ENCODE measurements at regions of chr7 and their contacts with region 1.

Region 1: GRCh38 chr7:140175221-140176121 is 1.3 kb downstream of the KDM7A start:
- DNase-seq: peak; percentile 91 to 95 (median 93)
- ATAC-seq: peak; percentile 75 to 87 (median 79)
- H3K4me3 ChIP-seq: peak overlapping the region; percentile 56 to 98 (median 90)
- H3K27ac ChIP-seq: peak overlapping the region; percentile 76 to 100 (median 100)
- H3K4me1 ChIP-seq: peaks cover 0 to 41% (median 19%) of the 10 kb centered on the region in 12 donors
- H3K27me3 ChIP-seq: no peaks in the 10 kb centered on the region
- CTCF ChIP-seq: peak; percentile 67 to 89 (median 76)
- POLR2A ChIP-seq: peak; percentile 71 to 97

Region 2: GRCh38 chr7:140196361-140197217 is 21.1 kb after region 1 on chr7:
- intact Hi-C with region 1: loop called in 1 of 10 experiments (anchors 2 kb)
- DNase-seq: peak in 1 of 5 donors; percentile 38
- ATAC-seq: peak in 2 of 4 donors; percentile 20 to 57
- H3K4me3 ChIP-seq: no peak overlapping the region
- H3K27ac ChIP-seq: peak overlapping the region in 1 of 12 donors; percentile 32
- H3K4me1 ChIP-seq: peaks cover 0 to 13% (median 1%) of the 10 kb centered on the region in 12 donors
- H3K27me3 ChIP-seq: no peaks in the 10 kb centered on the region
- CTCF ChIP-seq: no peak
- POLR2A ChIP-seq: no peak

Region 3: GRCh38 chr7:140230861-140231770 is 55.6 kb after region 1 on chr7:
- intact Hi-C with region 1: loop called in 4 of 10 experiments (anchors 2 to 5 kb)
- DNase-seq: peak in 4 of 5 donors; percentile 34 to 64 (median 56)
- ATAC-seq: peak; percentile 19 to 80 (median 72)
- H3K4me3 ChIP-seq: peak overlapping the region; percentile 16 to 68 (median 54)
- H3K27ac ChIP-seq: peak overlapping the region in 9 of 12 donors; percentile 10 to 84 (median 47)
- H3K4me1 ChIP-seq: peaks cover 0 to 41% (median 10%) of the 10 kb centered on the region in 12 donors
- H3K27me3 ChIP-seq: peaks cover 0 to 7% (median 0%) of the 10 kb centered on the region in 9 donors
- CTCF ChIP-seq: no peak
- POLR2A ChIP-seq: no peak

Region 4: GRCh38 chr7:140316165-140316661 is 140.7 kb after region 1 on chr7:
- intact Hi-C with region 1: loop called in 2 of 10 experiments (anchors 5 to 10 kb)
- DNase-seq: peak; percentile 42 to 82 (median 70)
- ATAC-seq: peak; percentile 72 to 97 (median 94)
- H3K4me3 ChIP-seq: peak overlapping the region in 7 of 12 donors; percentile 3 to 45 (median 28)
- H3K27ac ChIP-seq: peak overlapping the region in 5 of 12 donors; percentile 1 to 89 (median 57)
- H3K4me1 ChIP-seq: peaks cover 0 to 54% (median 5%) of the 10 kb centered on the region in 12 donors
- H3K27me3 ChIP-seq: no peaks in the 10 kb centered on the region
- CTCF ChIP-seq: no peak
- POLR2A ChIP-seq: no peak

Region 5: DNA sequence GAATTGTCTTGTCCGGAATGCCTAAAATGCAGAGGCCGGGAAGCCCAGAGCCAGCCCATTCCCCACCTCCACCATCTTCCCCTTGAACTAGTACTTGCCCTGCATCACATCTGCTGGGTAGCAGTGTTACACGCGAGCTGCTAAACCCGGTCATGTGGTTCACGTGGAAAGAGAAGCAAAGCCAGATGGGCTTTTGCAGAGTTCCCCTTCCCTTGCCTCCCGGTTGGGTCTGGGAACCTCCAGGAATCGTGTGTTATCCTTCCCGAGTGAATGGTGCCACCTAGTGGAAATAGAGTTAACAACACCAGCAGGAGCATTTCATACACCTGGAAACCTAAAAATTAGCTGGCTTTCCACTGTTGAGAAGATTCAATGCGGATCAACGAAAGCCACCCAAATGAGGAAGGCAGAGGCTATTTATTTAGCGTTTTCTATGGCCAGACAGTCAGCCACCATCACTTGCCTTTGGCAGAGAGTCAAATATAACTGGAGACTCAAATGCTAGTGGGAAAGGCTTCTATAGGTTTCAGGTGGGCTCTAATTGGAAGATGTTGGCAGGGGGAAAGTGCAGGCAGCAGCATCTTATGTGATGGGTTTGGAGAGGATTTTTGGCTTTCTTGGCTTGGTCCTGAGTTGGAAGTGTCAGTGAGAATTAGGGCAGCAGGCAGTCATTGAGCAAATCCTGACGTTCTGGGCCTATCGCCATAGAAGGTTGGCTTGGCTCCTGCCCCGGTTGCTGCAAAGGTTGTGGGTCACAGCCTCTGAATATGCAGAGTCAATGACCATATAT is 478.0 kb after region 1 on chr7:
- intact Hi-C with region 1: loop called in 1 of 10 experiments (anchors 5 kb)
- DNase-seq: peak in 4 of 5 donors; percentile 64 to 71 (median 64)
- ATAC-seq: peak; percentile 52 to 74 (median 68)
- H3K4me3 ChIP-seq: no peak overlapping the region
- H3K27ac ChIP-seq: no peak overlapping the region
- H3K4me1 ChIP-seq: peaks cover 0 to 42% (median 19%) of the 10 kb centered on the region in 12 donors
- H3K27me3 ChIP-seq: no peaks in the 10 kb centered on the region
- CTCF ChIP-seq: peak; percentile 69 to 97 (median 91)
- POLR2A ChIP-seq: no peak

Measured in heart left ventricle (tissue), 16 donors.